ENCODE measurements at regions of chr2 and their contacts with region 1.

Region 1: DNA sequence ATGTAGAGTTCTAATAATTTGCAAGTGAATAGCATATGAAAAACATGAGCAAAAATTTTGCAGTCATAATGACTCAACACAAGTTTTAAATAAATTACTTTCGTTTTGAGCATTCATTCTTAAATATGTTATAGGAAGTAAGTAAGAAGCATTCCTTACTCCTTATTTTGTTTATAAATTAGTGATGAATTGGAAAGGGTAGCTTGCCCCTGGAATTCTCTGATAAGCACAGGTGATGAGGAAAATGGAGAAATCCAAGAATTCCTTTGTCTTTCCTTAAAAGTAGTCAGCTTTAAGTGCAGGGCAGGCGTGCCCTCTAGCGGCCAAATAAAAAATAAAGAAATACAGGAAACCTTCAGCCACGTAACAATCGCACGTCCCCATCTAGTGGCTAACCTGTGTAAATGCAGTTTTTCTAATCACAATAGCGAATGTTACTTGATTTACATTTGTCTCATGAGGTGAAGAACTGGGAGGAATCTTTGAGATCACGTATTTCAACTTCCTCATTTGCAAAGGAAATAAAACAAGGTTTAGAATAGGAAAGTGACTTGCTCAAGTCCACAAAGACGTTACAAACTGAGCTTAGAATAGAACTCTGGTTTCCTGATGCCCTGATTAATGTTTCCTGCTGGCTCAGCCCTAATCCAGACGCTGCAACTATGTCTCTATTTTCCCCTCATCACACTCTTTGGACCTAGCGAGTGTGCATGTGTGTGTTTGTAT is 47.2 kb upstream of the ZNG1B start:
- DNase-seq: peak; percentile 85

Region 2: DNA sequence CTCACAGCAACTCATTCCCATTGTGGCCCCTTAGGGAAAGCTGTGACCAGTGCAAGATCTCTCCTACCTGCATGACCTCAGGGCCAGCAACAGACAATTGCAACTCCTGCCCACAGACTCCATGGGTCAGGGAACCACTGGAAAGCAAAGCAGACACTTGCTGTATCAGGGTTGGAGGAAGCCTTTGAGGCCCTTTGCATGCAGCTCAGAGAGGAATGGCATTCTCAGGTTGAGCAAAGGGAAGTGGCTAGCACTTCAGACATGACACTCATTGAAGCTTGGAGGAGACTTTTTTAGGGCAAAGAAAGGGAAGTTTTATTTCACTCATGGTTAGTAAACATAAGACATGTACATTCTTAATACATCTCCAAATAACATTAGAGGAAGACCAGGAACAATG is 300.4 kb before region 1 on chr2:
- in situ Hi-C with region 1: no loop called
- DNase-seq: no peak

Region 3: GRCh38 chr2:113138428-113139322 is 251.6 kb before region 1 on chr2:
- in situ Hi-C with region 1: loop called (anchors 25 kb)
- DNase-seq: peak; percentile 71

Region 4: DNA sequence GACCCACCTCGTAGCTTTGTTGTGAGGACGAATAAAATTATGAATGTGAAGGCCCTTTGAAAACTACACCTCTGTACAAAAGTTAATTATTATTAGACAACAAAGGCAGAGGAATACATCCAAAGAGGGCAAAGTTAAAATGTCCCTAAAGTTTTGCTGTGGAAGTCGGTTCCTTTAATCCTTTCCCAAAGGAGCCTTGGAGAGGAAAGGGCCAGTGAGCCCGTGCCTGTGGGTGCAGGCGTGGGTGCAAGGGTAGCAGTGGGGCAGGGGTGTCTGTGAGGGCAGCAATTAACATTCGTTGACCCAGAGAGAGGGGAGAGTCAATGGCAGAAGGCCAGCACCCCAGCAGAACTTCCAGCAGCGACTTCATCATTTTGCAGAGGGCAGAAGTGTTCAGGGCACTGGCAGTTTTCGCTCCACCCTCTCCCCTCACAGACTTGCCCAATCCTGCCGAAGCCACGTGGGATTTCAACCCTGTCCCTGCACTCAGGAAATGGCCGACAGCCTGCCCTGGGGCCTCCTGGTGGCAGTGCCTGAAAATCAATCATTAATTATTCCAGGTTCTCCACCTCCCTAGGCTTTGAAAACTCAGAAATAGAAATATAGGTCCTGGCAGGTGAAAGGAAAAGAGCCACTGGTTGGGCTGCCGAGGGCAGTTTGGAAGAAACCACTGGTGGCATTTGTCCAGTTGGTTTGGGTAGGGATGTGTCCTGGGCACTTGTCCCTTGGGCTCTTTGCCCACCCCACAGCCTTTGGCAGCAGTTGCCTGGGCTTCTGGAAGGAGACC is 107.3 kb before region 1 on chr2:
- in situ Hi-C with region 1: no loop called
- DNase-seq: peak; percentile 99